ENCODE measurements at regions of chr3 and their contacts with region 1.

Region 1: DNA sequence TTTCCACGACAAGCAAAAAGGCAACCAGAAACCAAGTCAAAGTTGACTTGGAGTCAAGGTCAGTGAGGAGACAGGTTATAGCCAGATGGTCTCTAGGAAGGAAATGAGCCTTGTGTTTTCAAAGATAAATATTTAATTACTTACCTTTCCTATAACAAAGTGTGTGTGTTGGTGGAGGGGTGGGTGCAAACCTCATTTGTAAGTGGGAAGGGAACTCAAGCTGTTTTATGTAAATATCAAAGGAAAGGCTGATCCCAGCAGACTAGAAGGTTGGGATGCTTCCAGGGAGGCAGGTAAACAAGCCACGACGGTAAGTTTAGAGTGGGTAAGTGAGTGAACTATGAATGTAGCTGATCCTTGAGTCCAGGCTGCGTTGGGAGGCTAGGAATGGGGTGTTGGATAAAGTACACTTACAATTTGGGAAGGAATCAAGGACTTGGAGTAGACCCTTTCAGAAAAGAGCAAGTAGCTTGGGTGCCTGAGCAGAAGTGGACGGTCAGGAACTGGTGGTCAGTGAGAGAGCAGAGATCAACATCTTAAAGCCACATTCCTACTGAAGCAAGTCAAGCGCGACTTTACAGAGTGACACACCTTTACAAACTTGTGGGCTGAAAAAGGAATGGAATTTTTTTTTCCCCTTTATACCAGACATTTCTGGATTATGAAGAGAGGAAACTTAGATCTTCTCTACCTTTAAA is 82.0 kb upstream of the TBL1XR1 start:
- DNase-seq: no peak
- ATAC-seq: no peak
- H3K4me3 ChIP-seq: no peak overlapping the region
- H3K4me3 Mint-ChIP-seq: no peak overlapping the region
- H3K27ac ChIP-seq: no peak overlapping the region
- H3K27ac Mint-ChIP-seq: no peak overlapping the region
- H3K4me1 ChIP-seq: peaks cover 17% of the 10 kb centered on the region
- H3K4me1 Mint-ChIP-seq: peaks cover 21% of the 10 kb centered on the region in 2 donors
- H3K27me3 ChIP-seq: no peaks in the 10 kb centered on the region
- H3K27me3 Mint-ChIP-seq: no peaks in the 10 kb centered on the region
- CTCF ChIP-seq: no peak

Region 2: DNA sequence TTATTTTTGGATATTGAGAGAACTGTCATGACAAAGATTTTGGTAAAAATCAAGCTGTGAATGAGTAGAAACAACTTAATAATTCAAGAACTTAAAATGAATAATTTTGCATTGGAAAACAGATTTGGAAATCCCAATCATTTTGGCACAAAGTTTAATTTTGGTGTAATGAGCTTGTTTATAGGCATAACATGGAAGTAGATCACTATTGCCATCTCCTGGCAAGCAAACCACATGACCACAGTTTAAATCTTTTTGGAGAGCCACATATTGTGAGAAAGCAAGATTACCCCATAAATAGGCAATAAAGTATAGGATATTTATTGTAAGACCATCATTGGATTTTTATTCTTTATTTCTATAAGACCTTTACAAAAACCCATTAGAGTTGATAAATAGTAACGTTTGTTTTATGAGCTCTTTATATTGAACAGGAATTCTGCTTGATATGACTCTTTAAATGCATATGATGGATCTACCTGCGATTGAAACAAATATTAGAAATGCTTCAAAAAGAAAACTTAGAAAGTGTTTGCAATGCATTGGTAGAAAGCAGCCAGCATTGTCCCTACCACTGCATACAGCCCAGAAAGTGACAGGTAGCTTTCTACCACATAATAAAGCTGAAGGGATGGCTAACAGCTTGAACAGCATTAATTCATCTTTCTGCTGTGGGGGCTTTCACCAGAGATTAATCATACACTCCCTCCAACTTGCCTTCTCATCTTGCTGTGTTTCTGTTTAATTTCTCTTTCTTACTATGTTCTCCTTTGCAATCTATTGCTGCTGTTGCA is 848.8 kb before region 1 on chr3:
- intact Hi-C with region 1: no loop called
- DNase-seq: no peak
- ATAC-seq: no peak
- H3K4me3 ChIP-seq: no peak overlapping the region
- H3K4me3 Mint-ChIP-seq: no peak overlapping the region
- H3K27ac ChIP-seq: no peak overlapping the region
- H3K27ac Mint-ChIP-seq: no peak overlapping the region
- H3K4me1 ChIP-seq: no peaks in the 10 kb centered on the region
- H3K4me1 Mint-ChIP-seq: no peaks in the 10 kb centered on the region
- H3K27me3 ChIP-seq: no peaks in the 10 kb centered on the region
- H3K27me3 Mint-ChIP-seq: no peaks in the 10 kb centered on the region
- CTCF ChIP-seq: no peak

Region 3: DNA sequence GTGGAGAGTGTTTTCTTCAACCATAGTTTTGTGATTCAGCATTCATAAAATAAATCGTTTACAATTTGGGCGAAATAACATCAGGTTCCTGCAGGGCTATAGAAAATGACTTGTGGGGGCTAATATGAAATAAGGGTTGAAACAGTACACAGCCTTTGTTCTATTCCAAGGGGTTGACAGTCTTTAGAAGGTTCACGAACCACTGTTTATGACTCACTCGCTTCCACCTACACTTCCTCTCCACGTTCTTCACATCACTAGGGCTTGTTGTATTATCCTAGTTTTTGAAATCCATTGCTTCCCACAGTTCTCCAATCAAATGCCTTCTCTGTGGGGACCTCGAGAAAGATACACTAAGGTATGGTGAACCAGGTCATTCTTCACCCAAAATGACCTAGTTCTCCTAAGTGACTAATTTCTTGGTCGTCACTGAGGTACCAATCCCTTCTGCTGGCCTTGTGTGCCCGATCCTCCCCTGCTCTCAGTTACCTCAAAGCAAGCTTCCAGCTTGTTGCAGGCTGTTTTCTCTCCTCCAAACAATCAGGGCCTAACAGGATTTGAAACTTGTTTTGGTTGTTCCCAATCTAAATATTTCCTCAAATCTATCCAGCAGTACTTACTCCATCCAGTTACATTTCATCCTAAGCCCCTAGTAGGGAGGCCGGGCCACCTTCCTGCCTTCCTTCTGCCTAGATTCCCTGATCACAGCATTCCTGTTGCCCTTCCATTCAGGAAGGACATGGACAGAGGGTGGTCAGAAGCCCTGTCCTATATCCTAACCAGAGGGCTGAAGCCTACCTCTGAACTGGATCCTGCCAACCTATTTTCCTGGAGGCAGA is 58.9 kb before region 1 on chr3:
- intact Hi-C with region 1: loop called (anchors 10 kb)
- DNase-seq: no peak
- ATAC-seq: no peak
- H3K4me3 ChIP-seq: no peak overlapping the region
- H3K4me3 Mint-ChIP-seq: no peak overlapping the region
- H3K27ac ChIP-seq: no peak overlapping the region
- H3K27ac Mint-ChIP-seq: no peak overlapping the region
- H3K4me1 ChIP-seq: peaks cover 5% of the 10 kb centered on the region
- H3K4me1 Mint-ChIP-seq: no peaks in the 10 kb centered on the region
- H3K27me3 ChIP-seq: no peaks in the 10 kb centered on the region
- H3K27me3 Mint-ChIP-seq: no peaks in the 10 kb centered on the region
- CTCF ChIP-seq: no peak

Region 4: DNA sequence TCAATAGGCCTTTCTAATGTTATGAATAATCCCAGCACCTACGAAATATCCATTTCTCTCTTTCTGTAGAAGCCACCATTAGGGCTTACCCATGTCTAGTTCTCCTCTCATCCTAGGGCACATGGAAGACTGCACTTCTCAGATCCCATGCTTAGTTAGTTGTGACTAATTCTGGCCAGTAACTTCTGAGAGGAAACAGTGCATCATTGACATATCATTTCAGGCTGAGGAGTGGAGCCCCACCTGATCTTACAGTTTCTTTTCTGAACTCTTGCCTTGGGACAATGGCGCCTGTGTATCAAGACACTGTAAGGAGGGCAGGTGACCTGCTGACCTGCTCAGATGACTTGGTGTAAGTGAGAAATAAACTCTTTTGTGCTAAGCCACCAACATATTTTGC is 42.6 kb before region 1 on chr3:
- intact Hi-C with region 1: no loop called
- DNase-seq: no peak
- ATAC-seq: no peak
- H3K4me3 ChIP-seq: no peak overlapping the region
- H3K4me3 Mint-ChIP-seq: no peak overlapping the region
- H3K27ac ChIP-seq: no peak overlapping the region
- H3K27ac Mint-ChIP-seq: no peak overlapping the region
- H3K4me1 ChIP-seq: no peaks in the 10 kb centered on the region
- H3K4me1 Mint-ChIP-seq: peaks cover 7% of the 10 kb centered on the region in 2 donors
- H3K27me3 ChIP-seq: no peaks in the 10 kb centered on the region
- H3K27me3 Mint-ChIP-seq: no peaks in the 10 kb centered on the region
- CTCF ChIP-seq: no peak

Region 5: GRCh38 chr3:177314897-177315296 is 35.6 kb after region 1 on chr3:
- intact Hi-C with region 1: no loop called
- DNase-seq: no peak
- ATAC-seq: no peak
- H3K4me3 ChIP-seq: no peak overlapping the region
- H3K4me3 Mint-ChIP-seq: no peak overlapping the region
- H3K27ac ChIP-seq: no peak overlapping the region
- H3K27ac Mint-ChIP-seq: no peak overlapping the region
- H3K4me1 ChIP-seq: peaks cover 2% of the 10 kb centered on the region
- H3K4me1 Mint-ChIP-seq: peaks cover 6 to 7% of the 10 kb centered on the region in 2 donors
- H3K27me3 ChIP-seq: no peaks in the 10 kb centered on the region
- H3K27me3 Mint-ChIP-seq: no peaks in the 10 kb centered on the region
- CTCF ChIP-seq: no peak

Region 6: GRCh38 chr3:177787279-177788041 is 508.2 kb after region 1 on chr3:
- intact Hi-C with region 1: no loop called
- DNase-seq: peak in 1 of 2 donors; percentile 29
- ATAC-seq: peak; percentile 78 to 94 (median 92)
- H3K4me3 ChIP-seq: no peak overlapping the region
- H3K4me3 Mint-ChIP-seq: peak overlapping the region; percentile 7
- H3K27ac ChIP-seq: peak overlapping the region; percentile 48
- H3K27ac Mint-ChIP-seq: peak overlapping the region; percentile 81 to 83
- H3K4me1 ChIP-seq: peaks cover 7% of the 10 kb centered on the region
- H3K4me1 Mint-ChIP-seq: peaks cover 32 to 36% of the 10 kb centered on the region in 2 donors
- H3K27me3 ChIP-seq: no peaks in the 10 kb centered on the region
- H3K27me3 Mint-ChIP-seq: no peaks in the 10 kb centered on the region
- CTCF ChIP-seq: no peak

Measured in natural killer cell (primary cell).